Mammary epithelial cell (primary cell): ENCODE measurements at regions of chr10 and their contacts with region 1.

Region 1: DNA sequence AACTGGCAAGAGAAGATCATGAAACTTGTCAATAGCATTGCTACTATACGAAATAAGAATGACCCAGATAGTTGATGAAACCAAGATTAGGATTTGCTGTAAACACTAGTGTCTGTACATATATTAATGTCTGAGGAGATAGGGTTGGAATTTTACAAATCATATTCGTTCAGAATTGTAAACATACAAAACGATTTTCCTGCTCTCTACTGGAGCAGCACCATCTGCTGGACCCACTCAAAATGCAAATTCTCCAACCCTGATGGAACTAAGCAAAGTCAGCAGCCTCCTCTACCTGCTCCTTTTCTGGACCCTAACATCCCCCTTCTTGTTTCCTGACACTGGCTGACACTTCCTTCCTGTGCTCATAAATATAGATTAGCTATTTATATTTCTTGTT is 29.4 kb upstream of the SGMS1 start:
- DNase-seq: peak; percentile 9
- H3K4me3 ChIP-seq: no peak overlapping the region
- H3K27ac ChIP-seq: no peak overlapping the region
- H3K4me1 ChIP-seq: no peaks in the 10 kb centered on the region
- H3K27me3 ChIP-seq: no peaks in the 10 kb centered on the region
- CTCF ChIP-seq: peak; percentile 26 to 70

Region 2: GRCh38 chr10:50552771-50553535 is 100.2 kb before region 1 on chr10:
- CTCF ChIA-PET with region 1: no interaction called
- dilution Hi-C with region 1: no loop called
- in situ Hi-C with region 1: no loop called
- intact Hi-C with region 1: loop called (anchors 1 kb)
- DNase-seq: no peak
- H3K4me3 ChIP-seq: no peak overlapping the region
- H3K27ac ChIP-seq: no peak overlapping the region
- H3K4me1 ChIP-seq: no peaks in the 10 kb centered on the region
- H3K27me3 ChIP-seq: no peaks in the 10 kb centered on the region
- CTCF ChIP-seq: peak; percentile 22 to 43

Region 3: GRCh38 chr10:50561816-50562215 is 91.3 kb before region 1 on chr10:
- CTCF ChIA-PET with region 1: no interaction called
- dilution Hi-C with region 1: no loop called
- in situ Hi-C with region 1: no loop called
- intact Hi-C with region 1: loop called (anchors 1 kb)
- DNase-seq: no peak
- H3K4me3 ChIP-seq: no peak overlapping the region
- H3K27ac ChIP-seq: no peak overlapping the region
- H3K4me1 ChIP-seq: no peaks in the 10 kb centered on the region
- H3K27me3 ChIP-seq: no peaks in the 10 kb centered on the region
- CTCF ChIP-seq: peak; percentile 60 to 75

Region 4: GRCh38 chr10:50605269-50606263 is 47.6 kb before region 1 on chr10:
- CTCF ChIA-PET with region 1: no interaction called
- dilution Hi-C with region 1: no loop called
- in situ Hi-C with region 1: no loop called
- intact Hi-C with region 1: no loop called
- DNase-seq: peak; percentile 96
- H3K4me3 ChIP-seq: no peak overlapping the region
- H3K27ac ChIP-seq: no peak overlapping the region
- H3K4me1 ChIP-seq: peaks cover 49% of the 10 kb centered on the region
- H3K27me3 ChIP-seq: no peaks in the 10 kb centered on the region
- CTCF ChIP-seq: no peak

Region 5: GRCh38 chr10:50739618-50740292 is 86.6 kb after region 1 on chr10 and contains the start of gene ASAH2B:
- CTCF ChIA-PET with region 1: no interaction called
- dilution Hi-C with region 1: no loop called
- in situ Hi-C with region 1: no loop called
- intact Hi-C with region 1: no loop called
- DNase-seq: peak; percentile 80
- H3K4me3 ChIP-seq: peak within 1 kb of the TSS; percentile 61 to 83 (median 61)
- H3K27ac ChIP-seq: peak within 1 kb of the TSS; percentile 61
- H3K4me1 ChIP-seq: peaks cover 7% of the 10 kb centered on the region
- H3K27me3 ChIP-seq: no peaks in the 10 kb centered on the region
- CTCF ChIP-seq: no peak
- total RNA-seq, gene ASAH2B: 4.7 to 9.5 TPM

Region 6: DNA sequence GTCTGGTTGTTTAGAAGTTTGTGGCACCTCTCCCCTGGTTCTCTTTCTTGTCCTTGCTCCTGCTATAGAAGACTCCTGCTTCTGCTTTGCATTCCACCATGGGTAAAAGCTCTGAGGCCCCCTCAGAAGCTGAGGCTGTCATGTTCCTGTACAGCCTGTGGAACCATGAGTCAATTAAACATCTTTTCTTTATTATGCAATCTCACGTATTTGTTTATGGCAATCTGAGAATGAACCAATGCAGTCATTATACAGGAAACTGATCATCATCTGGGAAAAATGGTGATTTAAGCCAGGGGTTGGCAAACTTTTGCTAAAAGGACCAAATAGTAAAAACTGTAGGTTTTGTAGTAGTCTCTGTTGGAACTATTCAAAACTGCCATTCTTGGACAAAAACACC is 870.9 kb after region 1 on chr10:
- CTCF ChIA-PET with region 1: no interaction called
- dilution Hi-C with region 1: no loop called
- in situ Hi-C with region 1: no loop called
- intact Hi-C with region 1: no loop called
- DNase-seq: no peak
- H3K4me3 ChIP-seq: no peak overlapping the region
- H3K27ac ChIP-seq: no peak overlapping the region
- H3K4me1 ChIP-seq: no peaks in the 10 kb centered on the region
- H3K27me3 ChIP-seq: peaks cover 14% of the 10 kb centered on the region
- CTCF ChIP-seq: no peak